Naive thymus-derived CD8-positive, alpha-beta T cell (primary cell): ENCODE measurements at regions of chr14 and their contacts with region 1.

Region 1: GRCh38 chr14:54488646-54489317 is at the start of gene GMFB:
- DNase-seq: peak; percentile 81 to 92 (median 86)
- ATAC-seq: peak; percentile 95 to 96
- H3K4me3 Mint-ChIP-seq: peak within 1 kb of the TSS; percentile 79 to 96 (median 92)
- H3K27ac Mint-ChIP-seq: peak within 1 kb of the TSS; percentile 94 to 98 (median 95)
- H3K4me1 Mint-ChIP-seq: peaks cover 23 to 66% (median 57%) of the 10 kb centered on the region in 4 donors
- H3K27me3 Mint-ChIP-seq: peaks cover 0 to 1% (median 0%) of the 10 kb centered on the region in 5 donors
- polyA plus RNA-seq, gene GMFB: 9.2 to 13.9 (median 11.0) TPM

Region 2: GRCh38 chr14:54241517-54241916 is 247.3 kb before region 1 on chr14:
- POLR2A ChIA-PET with region 1: no interaction called
- DNase-seq: no peak
- ATAC-seq: no peak
- H3K4me3 Mint-ChIP-seq: no peak overlapping the region
- H3K27ac Mint-ChIP-seq: no peak overlapping the region
- H3K4me1 Mint-ChIP-seq: no peaks in the 10 kb centered on the region
- H3K27me3 Mint-ChIP-seq: peaks cover 0 to 10% (median 0%) of the 10 kb centered on the region in 5 donors

Region 3: GRCh38 chr14:54459106-54459505 is 29.7 kb before region 1 on chr14:
- POLR2A ChIA-PET with region 1: no interaction called
- DNase-seq: no peak
- ATAC-seq: no peak
- H3K4me3 Mint-ChIP-seq: no peak overlapping the region
- H3K27ac Mint-ChIP-seq: no peak overlapping the region
- H3K4me1 Mint-ChIP-seq: no peaks in the 10 kb centered on the region
- H3K27me3 Mint-ChIP-seq: no peaks in the 10 kb centered on the region

Region 4: GRCh38 chr14:54509546-54510501 is 21.0 kb after region 1 on chr14 and contains the start of gene CGRRF1:
- POLR2A ChIA-PET with region 1: interaction called, 16 read pairs
- DNase-seq: peak; percentile 88 to 97 (median 92)
- ATAC-seq: peak; percentile 93 to 96
- H3K4me3 Mint-ChIP-seq: peak within 1 kb of the TSS; percentile 92 to 100 (median 97)
- H3K27ac Mint-ChIP-seq: peak within 1 kb of the TSS; percentile 83 to 97 (median 96)
- H3K4me1 Mint-ChIP-seq: peaks cover 30 to 58% (median 54%) of the 10 kb centered on the region in 4 donors
- H3K27me3 Mint-ChIP-seq: peaks cover 0 to 4% (median 0%) of the 10 kb centered on the region in 5 donors
- polyA plus RNA-seq, gene CGRRF1: 19.4 to 29.2 (median 24.0) TPM